Calu3 (cell line): ENCODE measurements at regions of chr17 and their contacts with region 1.

Region 1: DNA sequence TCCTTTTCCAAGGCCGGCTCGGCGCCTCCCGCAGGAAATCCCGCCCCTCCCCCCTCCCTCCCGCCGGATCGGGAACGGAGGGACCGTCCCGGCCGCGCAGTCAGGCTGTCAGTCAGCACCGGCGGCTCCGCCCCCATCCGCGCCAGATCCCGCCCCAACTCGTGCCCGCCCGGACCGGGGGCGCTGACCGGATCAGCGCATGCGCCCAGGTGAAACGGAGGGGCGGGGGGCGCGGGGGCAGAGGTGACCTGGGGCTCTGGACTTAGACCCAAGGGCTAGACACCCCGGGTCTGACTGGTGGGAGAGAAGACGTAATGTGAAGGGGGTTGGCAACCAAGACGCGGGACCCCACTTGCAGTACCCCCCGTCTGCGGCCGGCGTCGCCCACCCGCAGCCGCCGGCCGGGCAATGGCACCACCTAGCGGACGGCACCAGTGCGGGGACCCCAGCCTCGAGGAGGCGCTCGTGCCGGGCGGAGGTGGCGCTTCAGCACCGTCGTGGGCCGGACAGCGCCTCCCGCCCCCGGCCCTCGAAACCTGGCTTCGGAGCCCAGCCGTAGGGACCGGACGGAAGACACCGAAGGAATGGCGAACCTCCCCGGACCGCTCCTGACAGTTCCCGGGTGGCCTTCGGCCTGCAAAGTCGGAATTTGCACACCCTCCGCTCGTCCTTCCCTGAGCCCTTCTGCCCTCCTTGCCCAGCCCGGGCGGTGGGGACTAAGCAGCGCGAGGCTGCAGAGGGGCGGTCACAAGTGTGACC is at the start of gene CASKIN2:
- DNase-seq: peak; percentile 97
- H3K4me3 Mint-ChIP-seq: peak within 1 kb of the TSS; percentile 77
- H3K27ac Mint-ChIP-seq: no peak within 1 kb of the TSS
- H3K4me1 Mint-ChIP-seq: peaks cover 38% of the 10 kb centered on the region
- H3K27me3 Mint-ChIP-seq: no peaks in the 10 kb centered on the region
- CTCF ChIP-seq: peak; percentile 96
- total RNA-seq, gene CASKIN2: 30.0 and 30.4 TPM in 2 replicates

Region 2: GRCh38 chr17:75313941-75314551 is 201.6 kb before region 1 on chr17:
- CTCF ChIA-PET with region 1: no interaction called
- intact Hi-C with region 1: no loop called
- DNase-seq: no peak
- H3K4me3 Mint-ChIP-seq: no peak overlapping the region
- H3K27ac Mint-ChIP-seq: no peak overlapping the region
- H3K4me1 Mint-ChIP-seq: peaks cover 10% of the 10 kb centered on the region
- H3K27me3 Mint-ChIP-seq: no peaks in the 10 kb centered on the region
- CTCF ChIP-seq: no peak

Region 3: DNA sequence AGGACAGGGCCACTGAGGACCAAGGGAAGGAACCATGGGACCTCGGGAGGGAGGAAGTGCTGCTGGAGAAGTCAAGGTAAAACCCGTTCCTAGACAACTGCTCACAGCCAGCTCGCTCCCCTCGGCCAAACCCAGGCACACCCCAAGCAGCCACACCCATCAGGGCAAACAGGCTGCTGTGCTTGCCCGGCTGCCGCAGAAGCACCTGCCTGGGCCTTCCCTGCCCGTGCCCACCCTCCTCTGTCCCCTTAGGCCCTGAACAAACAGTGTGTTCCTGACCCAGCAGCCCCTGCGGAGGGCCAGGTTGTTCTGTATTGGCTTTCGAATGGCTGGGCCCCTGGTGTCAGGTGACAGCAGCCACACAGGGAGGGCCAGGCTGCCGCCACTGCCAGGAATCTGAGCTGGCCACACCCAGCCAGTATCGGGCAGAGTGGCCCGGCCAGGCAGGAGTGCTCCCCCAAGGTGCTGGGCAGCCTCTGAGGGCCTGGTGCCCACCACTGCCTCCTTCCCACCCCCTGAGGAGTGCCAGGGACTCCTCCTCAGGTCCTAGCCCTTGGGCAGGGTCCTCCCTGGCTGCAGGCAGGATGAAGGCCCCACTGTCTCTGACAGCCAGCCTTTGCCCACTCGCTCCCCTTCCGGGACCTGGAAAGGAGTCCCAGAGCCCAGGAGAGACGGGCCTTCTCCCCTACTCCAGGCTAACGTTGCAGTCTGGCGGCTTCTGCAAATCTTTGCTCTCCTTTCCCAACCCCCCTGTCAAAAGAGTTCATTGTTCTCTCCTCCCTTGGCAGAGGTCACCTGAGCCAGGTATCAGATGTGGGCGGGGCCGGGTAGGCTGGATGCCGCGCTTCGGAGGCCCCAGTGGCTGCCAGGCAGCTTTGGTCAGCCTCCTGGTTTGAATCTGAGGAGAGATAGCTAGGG is 33.8 kb after region 1 on chr17:
- CTCF ChIA-PET with region 1: interaction called, 11 read pairs
- intact Hi-C with region 1: no loop called
- DNase-seq: peak; percentile 95
- H3K4me3 Mint-ChIP-seq: peak overlapping the region; percentile 56
- H3K27ac Mint-ChIP-seq: peak overlapping the region; percentile 96
- H3K4me1 Mint-ChIP-seq: peaks cover 44% of the 10 kb centered on the region
- H3K27me3 Mint-ChIP-seq: no peaks in the 10 kb centered on the region
- CTCF ChIP-seq: no peak

Region 4: GRCh38 chr17:75589012-75589918 is 73.6 kb after region 1 on chr17:
- CTCF ChIA-PET with region 1: interaction called, 3 read pairs
- intact Hi-C with region 1: loop called (anchors 5 kb)
- DNase-seq: peak; percentile 95
- H3K4me3 Mint-ChIP-seq: peak overlapping the region; percentile 64
- H3K27ac Mint-ChIP-seq: no peak overlapping the region
- H3K4me1 Mint-ChIP-seq: no peaks in the 10 kb centered on the region
- H3K27me3 Mint-ChIP-seq: peaks cover 15% of the 10 kb centered on the region
- CTCF ChIP-seq: peak; percentile 61